ENCODE measurements at regions of chr2 and their contacts with region 1.

Region 1: GRCh38 chr2:231612179-231613053 is 19.8 kb downstream of the TEX44 start:
- DNase-seq: peak; percentile 93
- ATAC-seq: peak; percentile 39
- H3K4me3 ChIP-seq: peak overlapping the region in 4 of 5 experiments; percentile 9 to 68 (median 50)
- H3K4me3 Mint-ChIP-seq: peak overlapping the region; percentile 86
- H3K27ac ChIP-seq: peak overlapping the region; percentile 90 to 96
- H3K27ac Mint-ChIP-seq: peak overlapping the region; percentile 96
- H3K4me1 ChIP-seq: peaks cover 21 to 34% of the 10 kb centered on the region in 2 donors
- H3K4me1 Mint-ChIP-seq: peaks cover 42% of the 10 kb centered on the region
- H3K27me3 ChIP-seq: no peaks in the 10 kb centered on the region
- H3K27me3 Mint-ChIP-seq: no peaks in the 10 kb centered on the region
- CTCF ChIP-seq: peak; percentile 87

Region 2: GRCh38 chr2:231549446-231550239 is 62.8 kb before region 1 on chr2:
- CTCF ChIA-PET with region 1: no interaction called
- POLR2A ChIA-PET with region 1: no interaction called
- intact Hi-C with region 1: no loop called
- DNase-seq: no peak
- ATAC-seq: no peak
- H3K4me3 ChIP-seq: no peak overlapping the region
- H3K4me3 Mint-ChIP-seq: no peak overlapping the region
- H3K27ac ChIP-seq: no peak overlapping the region
- H3K27ac Mint-ChIP-seq: peak overlapping the region; percentile 32
- H3K4me1 ChIP-seq: peaks cover 40 to 50% of the 10 kb centered on the region in 2 donors
- H3K4me1 Mint-ChIP-seq: peaks cover 43% of the 10 kb centered on the region
- H3K27me3 ChIP-seq: no peaks in the 10 kb centered on the region
- H3K27me3 Mint-ChIP-seq: no peaks in the 10 kb centered on the region
- CTCF ChIP-seq: no peak

Region 3: DNA sequence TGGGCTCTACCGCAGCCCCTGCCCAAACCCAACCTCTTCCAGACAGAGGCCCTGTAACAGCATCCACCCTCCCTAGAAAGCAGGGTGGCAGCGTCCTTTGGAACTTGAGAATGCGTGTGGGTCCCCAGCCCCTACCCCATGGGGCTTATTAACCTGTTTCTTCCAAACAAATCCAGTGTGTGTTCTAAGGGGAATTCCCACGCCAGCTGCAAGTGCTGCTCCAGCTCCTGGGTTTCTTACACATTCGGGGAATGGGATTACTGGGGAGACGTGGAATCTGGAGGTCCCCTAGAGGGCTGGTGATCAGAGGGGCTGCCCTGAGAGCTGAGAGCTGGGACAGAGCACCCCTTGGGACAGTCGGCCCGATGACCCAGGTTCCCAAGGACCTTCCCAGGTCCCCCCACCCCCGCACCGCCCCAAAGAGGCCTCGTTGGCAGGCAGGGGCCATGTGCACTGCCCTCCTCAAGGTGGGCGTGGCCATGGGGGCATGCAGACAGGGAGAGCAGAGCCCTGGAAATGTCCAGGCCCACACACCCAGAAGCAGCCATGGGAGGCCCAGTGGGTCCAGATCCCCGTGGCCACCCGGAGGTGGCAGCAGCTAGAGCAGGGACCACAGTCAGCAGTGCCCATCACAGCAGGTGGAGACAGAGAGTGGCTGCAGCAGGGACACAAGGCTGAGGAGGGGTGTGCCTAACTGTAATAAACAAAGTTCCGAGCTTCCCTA is 38.6 kb before region 1 on chr2:
- CTCF ChIA-PET with region 1: no interaction called
- POLR2A ChIA-PET with region 1: no interaction called
- intact Hi-C with region 1: no loop called
- DNase-seq: no peak
- ATAC-seq: no peak
- H3K4me3 ChIP-seq: no peak overlapping the region
- H3K4me3 Mint-ChIP-seq: no peak overlapping the region
- H3K27ac ChIP-seq: no peak overlapping the region
- H3K27ac Mint-ChIP-seq: no peak overlapping the region
- H3K4me1 ChIP-seq: no peaks in the 10 kb centered on the region
- H3K4me1 Mint-ChIP-seq: no peaks in the 10 kb centered on the region
- H3K27me3 ChIP-seq: no peaks in the 10 kb centered on the region
- H3K27me3 Mint-ChIP-seq: no peaks in the 10 kb centered on the region
- CTCF ChIP-seq: no peak

Region 4: GRCh38 chr2:231648587-231649174 is 36.3 kb after region 1 on chr2:
- CTCF ChIA-PET with region 1: interaction called, 54 read pairs
- POLR2A ChIA-PET with region 1: interaction called, 6 read pairs
- intact Hi-C with region 1: loop called (anchors 2 kb)
- DNase-seq: peak; percentile 77
- ATAC-seq: peak; percentile 97
- H3K4me3 ChIP-seq: no peak overlapping the region
- H3K4me3 Mint-ChIP-seq: no peak overlapping the region
- H3K27ac ChIP-seq: no peak overlapping the region
- H3K27ac Mint-ChIP-seq: peak overlapping the region; percentile 74
- H3K4me1 ChIP-seq: peaks cover 0 to 10% of the 10 kb centered on the region in 2 donors
- H3K4me1 Mint-ChIP-seq: peaks cover 7% of the 10 kb centered on the region
- H3K27me3 ChIP-seq: no peaks in the 10 kb centered on the region
- H3K27me3 Mint-ChIP-seq: no peaks in the 10 kb centered on the region
- CTCF ChIP-seq: peak; percentile 79

Region 5: GRCh38 chr2:231680992-231681853 is 68.8 kb after region 1 on chr2:
- CTCF ChIA-PET with region 1: interaction called, 561 read pairs
- POLR2A ChIA-PET with region 1: interaction called, 422 read pairs
- intact Hi-C with region 1: no loop called
- DNase-seq: peak; percentile 64
- ATAC-seq: peak; percentile 69
- H3K4me3 ChIP-seq: peak overlapping the region in 4 of 5 experiments; percentile 33 to 61 (median 52)
- H3K4me3 Mint-ChIP-seq: peak overlapping the region; percentile 87
- H3K27ac ChIP-seq: peak overlapping the region in 1 of 2 donors; percentile 71
- H3K27ac Mint-ChIP-seq: peak overlapping the region; percentile 87
- H3K4me1 ChIP-seq: peaks cover 20 to 54% of the 10 kb centered on the region in 2 donors
- H3K4me1 Mint-ChIP-seq: peaks cover 44% of the 10 kb centered on the region
- H3K27me3 ChIP-seq: no peaks in the 10 kb centered on the region
- H3K27me3 Mint-ChIP-seq: no peaks in the 10 kb centered on the region
- CTCF ChIP-seq: no peak

Region 6: GRCh38 chr2:231706731-231707624 is 94.6 kb after region 1 on chr2:
- CTCF ChIA-PET with region 1: interaction called, 320 read pairs
- POLR2A ChIA-PET with region 1: interaction called, 108 read pairs
- intact Hi-C with region 1: loop called (anchors 1 kb)
- DNase-seq: peak; percentile 98
- ATAC-seq: peak; percentile 48
- H3K4me3 ChIP-seq: peak overlapping the region; percentile 77 to 99 (median 89)
- H3K4me3 Mint-ChIP-seq: peak overlapping the region; percentile 99
- H3K27ac ChIP-seq: peak overlapping the region; percentile 98 to 99
- H3K27ac Mint-ChIP-seq: peak overlapping the region; percentile 100
- H3K4me1 ChIP-seq: peaks cover 20 to 38% of the 10 kb centered on the region in 2 donors
- H3K4me1 Mint-ChIP-seq: peaks cover 28% of the 10 kb centered on the region
- H3K27me3 ChIP-seq: no peaks in the 10 kb centered on the region
- H3K27me3 Mint-ChIP-seq: no peaks in the 10 kb centered on the region
- CTCF ChIP-seq: peak; percentile 96

Region 7: GRCh38 chr2:231786177-231786916 is 173.9 kb after region 1 on chr2 and contains the start of gene COPS7B:
- CTCF ChIA-PET with region 1: interaction called, 7 read pairs
- POLR2A ChIA-PET with region 1: interaction called, 9 read pairs
- intact Hi-C with region 1: loop called (anchors 1 kb)
- DNase-seq: peak; percentile 89
- ATAC-seq: peak; percentile 53
- H3K4me3 ChIP-seq: peak within 1 kb of the TSS; percentile 52 to 92 (median 85)
- H3K4me3 Mint-ChIP-seq: peak within 1 kb of the TSS; percentile 85
- H3K27ac ChIP-seq: peak within 1 kb of the TSS; percentile 38 to 73
- H3K27ac Mint-ChIP-seq: peak within 1 kb of the TSS; percentile 90
- H3K4me1 ChIP-seq: peaks cover 32% of the 10 kb centered on the region in 2 donors
- H3K4me1 Mint-ChIP-seq: peaks cover 70% of the 10 kb centered on the region
- H3K27me3 ChIP-seq: no peaks in the 10 kb centered on the region
- H3K27me3 Mint-ChIP-seq: no peaks in the 10 kb centered on the region
- CTCF ChIP-seq: peak; percentile 64
- total RNA-seq, gene COPS7B: 52.7 and 58.5 TPM in 2 replicates

Measured in B cell (primary cell).